ENCODE measurements at regions of chr1 and their contacts with region 1.

Region 1: DNA sequence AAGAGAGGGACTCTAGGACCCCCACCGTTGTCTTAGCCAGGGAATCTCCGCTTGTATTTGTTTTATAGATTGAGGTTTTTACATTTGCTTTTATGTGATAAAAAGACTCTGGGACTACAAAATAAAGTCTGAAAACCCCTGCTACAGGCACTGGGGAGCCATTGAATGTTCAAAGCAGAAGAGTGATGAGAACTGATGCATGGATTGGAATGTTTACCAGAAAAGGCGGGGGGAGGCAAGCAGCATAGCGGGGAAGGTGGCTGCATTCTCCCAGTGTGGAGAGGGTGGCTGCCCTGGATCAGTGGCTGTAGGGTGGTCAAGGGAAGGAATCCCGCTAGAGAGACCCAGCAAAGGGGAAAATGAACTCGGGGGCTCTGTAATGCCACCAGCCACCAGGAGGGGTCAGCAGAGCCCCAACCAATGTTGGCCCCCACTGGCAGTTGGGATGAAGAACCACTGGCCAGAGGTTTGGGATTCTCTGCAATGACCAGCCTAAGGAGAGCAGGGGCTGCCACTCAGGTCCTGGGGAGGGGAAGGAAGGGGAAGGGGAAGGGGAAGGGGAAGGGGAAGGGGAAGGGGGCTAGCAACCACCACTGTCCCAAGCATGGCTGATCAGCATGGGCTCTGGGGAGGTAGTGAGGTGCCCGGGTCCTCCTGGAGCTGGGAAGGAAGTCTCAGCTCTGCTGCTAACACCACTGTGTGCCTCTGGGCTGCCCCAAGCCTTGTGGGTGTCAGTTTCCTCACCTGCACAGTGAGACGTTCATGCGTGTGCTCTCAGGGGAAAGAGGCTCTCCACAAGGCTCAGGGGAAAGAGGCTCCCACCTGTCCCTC is 19.2 kb upstream of the PEF1 start:
- DNase-seq: peak; percentile 88
- CTCF ChIP-seq: peak; percentile 98

Region 2: GRCh38 chr1:31535561-31535960 is 128.3 kb before region 1 on chr1:
- in situ Hi-C with region 1: no loop called
- DNase-seq: no peak
- CTCF ChIP-seq: no peak

Region 3: GRCh38 chr1:31715087-31715872 is 51.4 kb after region 1 on chr1:
- in situ Hi-C with region 1: loop called (anchors 10 kb)
- DNase-seq: peak; percentile 80
- CTCF ChIP-seq: peak; percentile 70

Region 4: DNA sequence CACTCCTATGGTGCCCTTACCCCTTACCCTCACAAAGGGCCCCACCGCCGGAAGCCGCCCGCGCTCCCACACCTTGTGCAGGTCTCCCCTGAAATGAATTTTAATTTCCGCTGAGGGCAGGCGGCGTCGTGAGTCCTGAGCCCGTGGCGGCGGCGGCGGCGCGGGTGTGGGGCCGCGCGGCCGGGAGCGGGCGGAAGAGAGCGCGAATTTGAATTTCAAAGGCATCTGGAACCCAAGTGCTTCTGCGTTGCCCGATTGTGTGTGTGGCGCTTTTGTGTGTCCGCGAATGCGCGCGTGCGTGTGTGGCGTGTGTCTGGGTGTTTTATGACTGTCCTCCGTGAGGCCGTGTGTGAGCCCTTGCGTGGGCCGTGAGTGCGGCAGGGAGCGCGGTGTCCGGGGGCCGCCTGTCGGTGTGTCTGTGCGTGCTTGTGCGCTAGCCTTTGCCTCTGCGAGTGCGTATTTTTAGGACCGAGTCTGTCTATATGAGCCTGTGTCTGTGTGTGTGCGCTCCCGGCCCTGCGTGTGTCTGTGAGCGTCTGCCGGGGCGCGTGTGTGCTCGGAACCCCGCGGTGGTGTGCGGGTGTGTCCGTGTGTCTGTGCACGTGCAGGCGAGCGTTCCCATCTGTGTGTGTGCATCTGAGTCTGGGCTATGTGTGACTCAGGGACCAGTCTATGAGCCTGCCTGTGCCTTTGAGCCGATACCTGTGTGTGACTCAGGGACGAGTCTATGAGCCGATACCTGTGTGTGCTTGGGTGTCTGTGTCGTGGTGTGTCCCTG is 108.2 kb after region 1 on chr1:
- in situ Hi-C with region 1: loop called (anchors 10 kb)
- DNase-seq: peak; percentile 47
- CTCF ChIP-seq: no peak

Region 5: GRCh38 chr1:31955917-31956736 is 292.3 kb after region 1 on chr1:
- in situ Hi-C with region 1: loop called (anchors 25 kb)
- DNase-seq: peak; percentile 73
- CTCF ChIP-seq: peak; percentile 32

Region 6: GRCh38 chr1:32072622-32073298 is 408.9 kb after region 1 on chr1 and contains the start of gene TMEM39B:
- in situ Hi-C with region 1: loop called (anchors 25 kb)
- DNase-seq: peak; percentile 97
- CTCF ChIP-seq: no peak

Region 7: GRCh38 chr1:32400876-32401631 is 737.2 kb after region 1 on chr1:
- in situ Hi-C with region 1: loop called (anchors 25 kb)
- DNase-seq: peak; percentile 65
- CTCF ChIP-seq: peak; percentile 88

Measured in GM13977 (cell line).